WTC11 (cell line): ENCODE measurements at regions of chr9 and their contacts with region 1.

Region 1: GRCh38 chr9:36855448-36856315 is 178.4 kb downstream of the PAX5 start:
- DNase-seq: peak; percentile 77
- ATAC-seq: peak; percentile 90
- H3K4me3 Mint-ChIP-seq: no peak overlapping the region
- H3K27ac Mint-ChIP-seq: no peak overlapping the region
- H3K4me1 Mint-ChIP-seq: peaks cover 37% of the 10 kb centered on the region
- H3K27me3 Mint-ChIP-seq: no peaks in the 10 kb centered on the region; the same call in 1 of the 2 replicates
- CTCF ChIP-seq: peak; percentile 37; the same call in 1 of the 2 replicates

Region 2: GRCh38 chr9:36793277-36793676 is 62.4 kb before region 1 on chr9:
- CTCF ChIA-PET with region 1: interaction called, 19 read pairs
- POLR2A ChIA-PET with region 1: no interaction called
- DNase-seq: peak; percentile 63
- ATAC-seq: peak; percentile 58
- H3K4me3 Mint-ChIP-seq: no peak overlapping the region
- H3K27ac Mint-ChIP-seq: no peak overlapping the region
- H3K4me1 Mint-ChIP-seq: peaks cover 4% of the 10 kb centered on the region
- H3K27me3 Mint-ChIP-seq: no peaks in the 10 kb centered on the region; the same call in 1 of the 2 replicates
- CTCF ChIP-seq: peak; percentile 64

Region 3: GRCh38 chr9:36803961-36804360 is 51.7 kb before region 1 on chr9:
- CTCF ChIA-PET with region 1: interaction called, 13 read pairs
- POLR2A ChIA-PET with region 1: no interaction called
- DNase-seq: no peak
- ATAC-seq: no peak
- H3K4me3 Mint-ChIP-seq: no peak overlapping the region
- H3K27ac Mint-ChIP-seq: no peak overlapping the region
- H3K4me1 Mint-ChIP-seq: peaks cover 24% of the 10 kb centered on the region
- H3K27me3 Mint-ChIP-seq: no peaks in the 10 kb centered on the region; the same call in none of the 2 replicates
- CTCF ChIP-seq: no peak

Region 4: DNA sequence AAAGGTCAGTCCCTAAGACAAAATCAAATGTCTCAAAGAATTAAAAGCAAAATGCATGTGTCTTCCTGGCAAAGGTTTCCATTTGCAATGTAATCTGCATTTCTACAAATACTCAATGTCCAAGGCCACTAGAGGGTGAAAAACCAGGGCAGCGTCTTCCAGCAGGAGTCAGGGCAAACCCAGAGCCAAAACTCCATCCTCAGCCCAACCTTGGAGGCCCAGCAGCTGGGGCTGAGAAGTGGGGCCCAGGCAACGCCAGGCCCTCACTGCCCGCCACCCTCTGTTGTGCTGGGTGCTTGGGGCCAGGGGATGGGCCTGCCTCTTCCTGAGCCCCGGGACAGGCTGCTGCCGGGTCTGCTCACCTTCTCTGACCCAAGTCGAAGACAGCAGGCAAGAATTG is 21.7 kb before region 1 on chr9:
- CTCF ChIA-PET with region 1: interaction called, 20 read pairs
- POLR2A ChIA-PET with region 1: interaction called, 3 read pairs
- DNase-seq: peak; percentile 49
- ATAC-seq: peak; percentile 89
- H3K4me3 Mint-ChIP-seq: no peak overlapping the region
- H3K27ac Mint-ChIP-seq: no peak overlapping the region
- H3K4me1 Mint-ChIP-seq: peaks cover 43% of the 10 kb centered on the region
- H3K27me3 Mint-ChIP-seq: no peaks in the 10 kb centered on the region
- CTCF ChIP-seq: no peak

Region 5: DNA sequence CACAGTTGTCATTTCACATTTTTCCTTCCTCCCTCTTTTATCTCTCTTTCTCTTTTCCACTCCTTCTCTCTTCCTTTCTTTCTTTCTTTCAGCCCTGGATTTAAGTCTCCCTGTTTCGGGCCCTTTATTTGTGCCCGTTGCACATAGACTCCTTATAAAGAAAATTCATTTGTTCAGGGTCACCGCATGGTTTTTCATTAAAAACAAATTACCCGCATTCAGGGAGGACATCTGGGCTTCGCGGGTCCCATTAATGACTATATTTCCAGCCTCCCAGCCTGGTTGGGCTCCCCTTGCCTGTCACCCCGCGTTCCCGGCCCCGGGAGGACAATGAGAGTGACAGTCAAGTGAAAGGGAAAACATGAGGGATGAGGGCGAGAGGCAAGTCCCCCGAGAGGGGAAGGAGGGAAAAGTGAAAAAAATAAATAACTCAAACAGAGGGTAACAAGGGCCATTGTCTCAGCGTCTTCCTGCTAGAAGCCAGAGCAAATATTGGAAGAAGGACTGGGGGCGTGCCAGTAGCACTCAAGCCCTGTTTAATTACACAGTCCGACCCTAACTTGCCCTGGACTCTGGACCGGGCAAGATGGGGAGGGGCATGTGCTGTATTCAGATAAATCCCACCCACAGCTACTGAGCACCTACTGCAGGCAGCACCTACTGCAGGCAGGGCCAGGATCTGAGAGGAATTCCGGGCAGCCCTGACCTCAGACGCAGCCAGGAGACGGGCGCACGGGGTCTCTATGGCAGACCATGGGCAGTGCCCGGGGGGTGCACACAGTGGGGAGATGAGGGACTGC is 12.2 kb after region 1 on chr9:
- CTCF ChIA-PET with region 1: interaction called, 46 read pairs
- POLR2A ChIA-PET with region 1: no interaction called
- DNase-seq: no peak
- ATAC-seq: no peak
- H3K4me3 Mint-ChIP-seq: no peak overlapping the region
- H3K27ac Mint-ChIP-seq: no peak overlapping the region
- H3K4me1 Mint-ChIP-seq: peaks cover 30% of the 10 kb centered on the region
- H3K27me3 Mint-ChIP-seq: peaks cover 34% of the 10 kb centered on the region
- CTCF ChIP-seq: no peak